Heart right ventricle (tissue), 16 donors: ENCODE measurements at regions of chr1 and their contacts with region 1.

Region 1: GRCh38 chr1:56578963-56579875 is at the start of gene PLPP3:
- DNase-seq: peak; percentile 86 to 89
- ATAC-seq: peak; percentile 84 to 93 (median 88)
- H3K4me3 ChIP-seq: peak within 1 kb of the TSS; percentile 75 to 98 (median 94)
- H3K27ac ChIP-seq: peak within 1 kb of the TSS; percentile 93 to 99 (median 98)
- H3K4me1 ChIP-seq: peaks cover 0 to 46% (median 21%) of the 10 kb centered on the region in 9 donors
- H3K27me3 ChIP-seq: no peaks in the 10 kb centered on the region
- CTCF ChIP-seq: peak; percentile 23 to 71 (median 51)
- total RNA-seq, gene PLPP3: 59.4 to 136 (median 81.4) TPM

Region 2: DNA sequence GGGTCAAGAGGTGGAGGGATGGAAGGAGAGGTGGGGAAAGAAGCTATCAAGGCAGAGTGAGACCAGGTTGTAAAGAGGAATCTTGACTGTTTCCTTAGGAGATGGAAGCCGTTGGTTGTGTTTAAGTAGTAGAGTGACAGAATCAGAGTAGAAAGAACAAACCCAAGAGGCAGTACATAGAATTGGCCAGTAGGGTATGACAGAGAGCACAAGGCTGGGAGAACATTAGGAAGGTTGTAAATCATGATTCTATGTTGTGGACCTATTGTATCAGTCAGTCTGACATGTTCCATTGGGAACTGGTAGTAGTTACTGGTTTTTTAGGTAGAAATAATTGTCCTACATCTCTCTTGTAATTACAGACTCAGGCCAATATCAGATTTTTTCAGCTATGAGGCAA is 877.2 kb before region 1 on chr1:
- intact Hi-C with region 1: loop called in 1 of 10 experiments (anchors 10 kb)
- DNase-seq: no peak
- ATAC-seq: peak in 1 of 8 donors; percentile 56
- H3K4me3 ChIP-seq: no peak overlapping the region
- H3K27ac ChIP-seq: no peak overlapping the region
- H3K4me1 ChIP-seq: no peaks in the 10 kb centered on the region
- H3K27me3 ChIP-seq: no peaks in the 10 kb centered on the region
- CTCF ChIP-seq: peak; percentile 25 to 67 (median 58)

Region 3: DNA sequence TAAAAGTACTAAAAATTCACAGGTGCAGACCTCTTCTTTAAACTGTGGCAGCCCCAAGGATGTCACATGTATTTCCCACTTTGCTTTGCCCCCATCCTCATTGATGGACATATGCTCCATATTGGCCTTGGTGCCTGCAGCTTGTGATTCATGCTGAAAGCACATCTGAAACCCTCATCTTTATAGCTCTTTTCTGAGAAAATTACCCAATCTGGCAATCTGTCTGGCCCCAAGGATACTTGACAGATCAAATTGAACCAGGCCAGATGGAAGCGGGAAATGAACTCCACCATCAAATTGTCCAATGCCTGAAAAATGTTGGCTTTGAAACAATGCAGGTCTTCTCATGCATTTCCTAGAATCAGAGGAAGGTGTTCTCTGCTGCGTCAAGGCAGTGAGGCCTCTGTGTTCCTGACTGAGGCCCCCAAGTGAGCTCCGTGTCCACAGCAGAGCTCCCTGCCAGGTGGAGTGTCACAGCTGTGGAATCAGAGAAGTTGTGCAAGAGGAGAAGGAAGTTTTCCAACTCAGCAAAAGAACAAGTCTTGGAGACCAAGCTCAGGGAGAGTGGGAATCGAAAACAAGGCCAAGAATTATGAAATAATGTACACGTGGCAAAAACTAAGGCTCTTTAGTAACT is 323.6 kb before region 1 on chr1:
- intact Hi-C with region 1: loop called in 2 of 10 experiments (anchors 2 to 5 kb)
- DNase-seq: peak; percentile 60 to 66
- ATAC-seq: peak; percentile 80 to 95 (median 88)
- H3K4me3 ChIP-seq: no peak overlapping the region
- H3K27ac ChIP-seq: peak overlapping the region in 7 of 10 donors; percentile 11 to 44 (median 34)
- H3K4me1 ChIP-seq: peaks cover 0 to 38% (median 26%) of the 10 kb centered on the region in 9 donors
- H3K27me3 ChIP-seq: no peaks in the 10 kb centered on the region
- CTCF ChIP-seq: no peak

Region 4: GRCh38 chr1:56376188-56376984 is 202.8 kb before region 1 on chr1:
- intact Hi-C with region 1: loop called in 2 of 10 experiments (anchors 5 to 10 kb)
- DNase-seq: peak in 1 of 2 donors; percentile 41
- ATAC-seq: peak; percentile 26 to 75 (median 54)
- H3K4me3 ChIP-seq: peak overlapping the region in 1 of 10 donors; percentile 2
- H3K27ac ChIP-seq: peak overlapping the region in 9 of 10 donors; percentile 3 to 82 (median 65)
- H3K4me1 ChIP-seq: peaks cover 18 to 67% (median 52%) of the 10 kb centered on the region in 9 donors
- H3K27me3 ChIP-seq: peaks cover 0 to 7% (median 0%) of the 10 kb centered on the region in 7 donors
- CTCF ChIP-seq: no peak

Region 5: GRCh38 chr1:56434740-56435139 is 144.5 kb before region 1 on chr1:
- intact Hi-C with region 1: loop called in 3 of 10 experiments (anchors 10 kb)
- DNase-seq: no peak
- ATAC-seq: no peak
- H3K4me3 ChIP-seq: no peak overlapping the region
- H3K27ac ChIP-seq: no peak overlapping the region
- H3K4me1 ChIP-seq: peaks cover 4 to 83% (median 41%) of the 10 kb centered on the region in 9 donors
- H3K27me3 ChIP-seq: no peaks in the 10 kb centered on the region
- CTCF ChIP-seq: no peak

Region 6: DNA sequence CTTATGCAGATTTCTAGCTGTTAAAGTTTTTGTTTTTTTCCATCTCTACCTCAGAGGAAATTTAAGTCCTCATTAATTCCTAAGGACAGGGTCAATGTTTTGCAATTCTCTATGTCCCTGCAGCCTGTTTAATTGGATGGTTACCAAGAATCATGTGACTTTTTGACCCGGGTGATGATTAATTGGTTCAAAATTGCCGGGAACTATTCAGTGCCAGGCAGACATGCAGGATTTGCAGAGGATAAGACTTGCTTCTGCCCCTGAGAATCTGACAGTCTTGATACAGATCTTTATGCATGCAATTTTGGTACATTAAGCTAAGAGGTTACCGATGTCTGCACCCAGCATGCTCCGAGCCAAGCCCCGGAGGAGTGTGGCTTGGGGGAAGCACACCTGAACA is 87.8 kb before region 1 on chr1:
- intact Hi-C with region 1: loop called in 1 of 10 experiments (anchors 10 kb)
- DNase-seq: no peak
- ATAC-seq: peak in 2 of 8 donors; percentile 45 to 72
- H3K4me3 ChIP-seq: no peak overlapping the region
- H3K27ac ChIP-seq: no peak overlapping the region
- H3K4me1 ChIP-seq: peaks cover 0 to 33% (median 16%) of the 10 kb centered on the region in 9 donors
- H3K27me3 ChIP-seq: no peaks in the 10 kb centered on the region
- CTCF ChIP-seq: no peak

Region 7: GRCh38 chr1:56525489-56526041 is 53.7 kb before region 1 on chr1:
- intact Hi-C with region 1: loop called in 1 of 10 experiments (anchors 5 kb)
- DNase-seq: no peak
- ATAC-seq: peak in 7 of 8 donors; percentile 48 to 76 (median 63)
- H3K4me3 ChIP-seq: no peak overlapping the region
- H3K27ac ChIP-seq: peak overlapping the region in 7 of 10 donors; percentile 2 to 77 (median 29)
- H3K4me1 ChIP-seq: peaks cover 16 to 98% (median 93%) of the 10 kb centered on the region in 9 donors
- H3K27me3 ChIP-seq: no peaks in the 10 kb centered on the region
- CTCF ChIP-seq: no peak

Region 8: DNA sequence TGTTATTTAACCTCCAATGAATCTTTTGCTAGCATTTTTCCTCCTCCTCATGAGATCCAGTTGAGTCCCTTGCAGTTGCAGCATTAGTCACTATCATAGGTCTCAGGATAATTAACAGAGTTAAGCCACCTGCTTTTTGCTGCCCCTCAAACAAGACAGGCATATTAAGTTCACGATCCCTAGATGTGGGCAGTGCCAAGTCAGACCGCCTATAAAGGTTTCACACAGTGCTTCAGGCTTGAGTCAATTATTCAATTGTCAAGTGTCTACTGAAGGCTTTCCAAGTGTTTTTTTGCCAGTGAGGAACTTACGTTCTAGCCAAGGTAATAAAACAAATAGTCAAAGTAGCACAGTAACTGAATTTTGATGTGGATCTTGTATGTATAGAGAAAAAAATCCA is 669.6 kb after region 1 on chr1:
- intact Hi-C with region 1: no loop called
- DNase-seq: no peak
- ATAC-seq: no peak
- H3K4me3 ChIP-seq: no peak overlapping the region
- H3K27ac ChIP-seq: no peak overlapping the region
- H3K4me1 ChIP-seq: peaks cover 0 to 7% (median 0%) of the 10 kb centered on the region in 9 donors
- H3K27me3 ChIP-seq: no peaks in the 10 kb centered on the region
- CTCF ChIP-seq: no peak